ENCODE measurements at regions of chr5 and their contacts with region 1.

Region 1: GRCh38 chr5:109935833-109936490 is 246.2 kb downstream of the MAN2A1 start:
- DNase-seq: no peak
- ATAC-seq: no peak
- H3K4me3 ChIP-seq: no peak overlapping the region
- H3K27ac ChIP-seq: no peak overlapping the region
- H3K4me1 ChIP-seq: peaks cover 10% of the 10 kb centered on the region; the same call in 1 of the 2 replicates
- H3K27me3 ChIP-seq: no peaks in the 10 kb centered on the region
- CTCF ChIP-seq: no peak

Region 2: GRCh38 chr5:109914906-109915305 is 21.1 kb before region 1 on chr5:
- CTCF ChIA-PET with region 1: no interaction called
- POLR2A ChIA-PET with region 1: interaction called, 10 read pairs
- intact Hi-C with region 1: no loop called
- DNase-seq: no peak
- ATAC-seq: no peak
- H3K4me3 ChIP-seq: no peak overlapping the region
- H3K27ac ChIP-seq: no peak overlapping the region
- H3K4me1 ChIP-seq: no peaks in the 10 kb centered on the region
- H3K27me3 ChIP-seq: no peaks in the 10 kb centered on the region
- CTCF ChIP-seq: no peak